ENCODE measurements at regions of chr10 and their contacts with region 1.

Region 1: GRCh38 chr10:45594276-45595106 is 78.1 kb downstream of the ZFAND4 start:
- DNase-seq: peak; percentile 95
- H3K4me3 ChIP-seq: peak overlapping the region; percentile 61 to 98 (median 82)
- H3K27ac ChIP-seq: peak overlapping the region; percentile 66 to 81 (median 74)
- H3K4me1 ChIP-seq: peaks cover 0 to 26% (median 17%) of the 10 kb centered on the region in 4 donors
- H3K27me3 ChIP-seq: peaks cover 0 to under 1% (median 0%) of the 10 kb centered on the region in 3 donors
- CTCF ChIP-seq: no peak
- EP300 ChIP-seq: peak in 1 of 4 donors; percentile 33
- POLR2A ChIP-seq: no peak

Region 2: GRCh38 chr10:45491091-45491490 is 103.4 kb before region 1 on chr10:
- intact Hi-C with region 1: no loop called
- DNase-seq: no peak
- H3K4me3 ChIP-seq: no peak overlapping the region
- H3K27ac ChIP-seq: no peak overlapping the region
- H3K4me1 ChIP-seq: no peaks in the 10 kb centered on the region
- H3K27me3 ChIP-seq: no peaks in the 10 kb centered on the region
- CTCF ChIP-seq: no peak
- EP300 ChIP-seq: no peak
- POLR2A ChIP-seq: no peak

Region 3: DNA sequence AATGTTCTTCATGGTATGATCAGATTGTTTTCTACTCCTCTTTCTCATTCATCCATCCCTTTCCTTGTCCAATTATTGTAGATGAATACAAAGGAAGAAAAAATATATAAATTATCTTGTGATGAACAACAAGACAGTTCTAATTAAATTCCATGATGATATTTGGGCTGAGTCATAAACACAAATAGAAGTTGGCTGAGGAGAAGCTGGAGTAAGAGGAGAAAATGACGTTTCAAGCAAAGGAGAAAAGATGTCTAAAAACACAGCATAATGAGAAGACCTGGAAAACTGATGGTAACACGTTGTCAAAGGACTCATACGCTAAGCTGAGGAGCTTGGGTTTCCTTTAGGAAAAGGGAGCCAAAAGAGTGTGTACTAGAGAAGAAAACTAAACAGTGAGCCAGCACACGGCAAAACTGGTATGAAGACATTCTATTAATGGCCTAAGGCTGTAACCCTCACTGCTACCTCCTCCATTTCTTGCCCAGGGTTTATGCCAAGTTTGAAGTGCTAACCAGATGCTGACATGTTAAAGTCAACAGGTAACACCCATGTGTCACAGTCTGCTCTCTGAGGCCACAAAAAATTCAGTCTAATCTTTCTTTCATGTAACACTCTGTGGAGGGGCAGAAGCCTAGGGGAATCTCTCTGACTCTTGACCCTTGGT is 52.0 kb after region 1 on chr10:
- intact Hi-C with region 1: no loop called
- DNase-seq: no peak
- H3K4me3 ChIP-seq: no peak overlapping the region
- H3K27ac ChIP-seq: no peak overlapping the region
- H3K4me1 ChIP-seq: no peaks in the 10 kb centered on the region
- H3K27me3 ChIP-seq: no peaks in the 10 kb centered on the region
- CTCF ChIP-seq: no peak
- EP300 ChIP-seq: no peak
- POLR2A ChIP-seq: no peak

Region 4: DNA sequence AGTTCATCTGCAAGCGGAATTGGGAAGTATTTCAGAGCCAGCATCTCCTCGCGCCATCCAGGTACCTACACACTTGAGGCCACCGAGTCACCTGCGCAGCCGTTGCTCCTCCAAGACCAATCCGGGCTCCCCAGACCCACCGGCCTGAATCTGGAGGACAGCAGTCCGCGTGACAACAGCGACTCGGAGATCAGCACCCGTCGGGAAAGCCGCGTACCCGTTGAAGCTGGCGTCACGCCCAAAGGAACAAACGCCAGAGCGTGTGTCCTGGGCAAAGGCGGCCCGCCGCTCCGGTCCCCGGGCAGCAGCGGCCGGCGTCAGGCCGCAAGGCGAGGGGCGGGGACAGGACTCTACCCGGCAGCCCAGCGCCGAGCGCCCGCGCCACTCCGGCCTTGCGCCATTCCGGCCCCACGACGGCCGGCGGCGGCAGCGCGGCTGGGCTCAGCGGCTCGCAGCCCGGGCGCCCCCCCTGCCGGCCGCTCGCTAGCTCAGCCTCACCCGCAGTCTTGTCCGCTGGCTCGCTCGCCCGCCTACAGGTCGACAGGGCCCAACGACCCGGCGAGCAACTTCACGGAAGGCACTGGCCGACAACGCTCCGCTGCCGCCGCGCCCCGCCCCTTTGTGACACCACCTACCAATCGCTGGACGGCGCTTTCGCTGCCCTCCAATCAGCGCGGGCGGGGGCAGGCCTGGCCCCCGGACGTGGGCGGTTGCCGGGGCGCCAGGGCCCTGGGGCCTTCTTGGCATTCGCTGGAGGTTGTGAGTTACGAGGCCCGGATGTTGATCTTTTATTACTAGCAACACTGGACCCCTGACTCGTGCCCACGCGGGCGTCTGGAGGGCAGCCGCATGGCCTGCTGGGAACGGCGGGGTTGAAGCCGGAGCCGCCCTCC is 77.9 kb after region 1 on chr10 and contains the start of gene ZFAND4:
- intact Hi-C with region 1: loop called (anchors 5 kb)
- DNase-seq: peak; percentile 99
- H3K4me3 ChIP-seq: peak within 1 kb of the TSS; percentile 66 to 84 (median 74)
- H3K27ac ChIP-seq: peak within 1 kb of the TSS; percentile 84 to 88 (median 86)
- H3K4me1 ChIP-seq: peaks cover 0 to 12% (median 5%) of the 10 kb centered on the region in 4 donors
- H3K27me3 ChIP-seq: no peaks in the 10 kb centered on the region
- CTCF ChIP-seq: peak in 1 of 4 experiments; percentile 40
- EP300 ChIP-seq: no peak
- POLR2A ChIP-seq: no peak
- total RNA-seq, gene ZFAND4: 13.9 to 24.2 (median 17.9) TPM

Measured in sigmoid colon (tissue), 7 donors.